ENCODE measurements at regions of chr11 and their contacts with region 1.

Region 1: DNA sequence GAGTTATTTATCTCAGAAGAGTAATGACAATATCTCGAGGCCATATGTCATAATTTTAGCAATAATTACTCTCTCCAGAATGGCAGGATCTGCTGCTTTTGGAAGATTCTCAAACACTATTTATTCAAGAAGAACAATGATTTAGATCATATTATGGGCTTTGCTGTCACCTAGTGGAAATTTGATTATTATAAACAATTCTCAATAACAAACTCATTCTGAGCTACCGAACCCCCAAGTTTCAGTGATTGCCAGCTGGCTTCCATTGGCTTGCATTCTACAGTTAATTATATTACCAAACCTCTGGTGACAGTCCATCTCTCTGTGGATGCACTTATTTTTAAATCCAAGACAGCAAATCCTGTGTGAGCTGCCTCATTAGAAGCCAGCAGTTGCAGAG is 27.9 kb upstream of the SLC36A4 start:
- DNase-seq: no peak
- H3K4me3 ChIP-seq: no peak overlapping the region
- H3K27ac ChIP-seq: no peak overlapping the region
- H3K4me1 ChIP-seq: no peaks in the 10 kb centered on the region
- H3K27me3 ChIP-seq: no peaks in the 10 kb centered on the region
- CTCF ChIP-seq: peak; percentile 3 to 37 (median 33)
- EP300 ChIP-seq: no peak
- POLR2A ChIP-seq: no peak

Region 2: GRCh38 chr11:92931746-92932422 is 293.8 kb before region 1 on chr11:
- in situ Hi-C with region 1: loop called in 3 of 4 experiments (anchors 10 to 25 kb)
- intact Hi-C with region 1: no loop called
- DNase-seq: no peak
- H3K4me3 ChIP-seq: no peak overlapping the region
- H3K27ac ChIP-seq: no peak overlapping the region
- H3K4me1 ChIP-seq: no peaks in the 10 kb centered on the region
- H3K27me3 ChIP-seq: no peaks in the 10 kb centered on the region
- CTCF ChIP-seq: no peak
- EP300 ChIP-seq: no peak
- POLR2A ChIP-seq: no peak

Measured in transverse colon (tissue), 4 donors.